Activated naive CD4-positive, alpha-beta T cell treated with anti-CD3 and anti-CD28 coated beads for 36 hours (primary cell): ENCODE measurements at regions of chr6 and their contacts with region 1.

Region 1: GRCh38 chr6:32984605-32985389 is 16.4 kb downstream of the BRD2 start:
- DNase-seq: peak; percentile 97
- H3K4me3 Mint-ChIP-seq: no peak overlapping the region
- H3K27ac Mint-ChIP-seq: no peak overlapping the region
- H3K4me1 Mint-ChIP-seq: peaks cover 14% of the 10 kb centered on the region
- H3K27me3 Mint-ChIP-seq: no peaks in the 10 kb centered on the region

Region 2: GRCh38 chr6:32838114-32838958 is 146.5 kb before region 1 on chr6 and contains the start of gene TAP2:
- CTCF ChIA-PET with region 1: interaction called, 6 read pairs
- intact Hi-C with region 1: loop called (anchors 1 kb)
- DNase-seq: peak; percentile 98
- H3K4me3 Mint-ChIP-seq: peak within 1 kb of the TSS; percentile 89
- H3K27ac Mint-ChIP-seq: peak within 1 kb of the TSS; percentile 99
- H3K4me1 Mint-ChIP-seq: peaks cover 81% of the 10 kb centered on the region
- H3K27me3 Mint-ChIP-seq: no peaks in the 10 kb centered on the region
- total RNA-seq, gene TAP2: 136 to 138 TPM

Region 3: DNA sequence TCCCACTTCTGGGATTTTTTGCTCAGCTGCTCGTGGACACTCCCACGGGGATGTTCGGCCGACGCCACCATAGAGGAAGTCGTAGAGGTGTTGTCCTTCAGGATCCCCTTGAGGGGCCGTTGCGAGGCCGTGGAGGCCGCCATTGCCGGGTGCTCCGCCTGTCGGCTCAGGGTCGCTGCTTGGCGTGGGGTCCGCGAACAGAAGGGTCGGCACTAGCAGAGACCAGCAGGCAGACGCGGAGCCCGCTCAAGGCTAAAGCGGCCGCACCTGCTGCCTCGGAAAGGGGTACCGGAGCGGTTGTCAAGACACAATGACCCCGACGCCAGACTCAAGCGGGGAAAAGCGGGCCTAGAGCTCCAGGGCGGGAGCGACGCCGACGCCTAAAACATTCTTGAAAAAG is 105.1 kb before region 1 on chr6:
- CTCF ChIA-PET with region 1: interaction called, 70 read pairs
- intact Hi-C with region 1: no loop called
- DNase-seq: no peak
- H3K4me3 Mint-ChIP-seq: no peak overlapping the region
- H3K27ac Mint-ChIP-seq: no peak overlapping the region
- H3K4me1 Mint-ChIP-seq: peaks cover 12% of the 10 kb centered on the region
- H3K27me3 Mint-ChIP-seq: no peaks in the 10 kb centered on the region

Region 4: GRCh38 chr6:32894080-32895005 is 90.5 kb before region 1 on chr6:
- CTCF ChIA-PET with region 1: interaction called, 24 read pairs
- intact Hi-C with region 1: loop called (anchors 2 kb)
- DNase-seq: peak; percentile 97
- H3K4me3 Mint-ChIP-seq: peak overlapping the region; percentile 97
- H3K27ac Mint-ChIP-seq: peak overlapping the region; percentile 96
- H3K4me1 Mint-ChIP-seq: peaks cover 37% of the 10 kb centered on the region
- H3K27me3 Mint-ChIP-seq: no peaks in the 10 kb centered on the region

Region 5: DNA sequence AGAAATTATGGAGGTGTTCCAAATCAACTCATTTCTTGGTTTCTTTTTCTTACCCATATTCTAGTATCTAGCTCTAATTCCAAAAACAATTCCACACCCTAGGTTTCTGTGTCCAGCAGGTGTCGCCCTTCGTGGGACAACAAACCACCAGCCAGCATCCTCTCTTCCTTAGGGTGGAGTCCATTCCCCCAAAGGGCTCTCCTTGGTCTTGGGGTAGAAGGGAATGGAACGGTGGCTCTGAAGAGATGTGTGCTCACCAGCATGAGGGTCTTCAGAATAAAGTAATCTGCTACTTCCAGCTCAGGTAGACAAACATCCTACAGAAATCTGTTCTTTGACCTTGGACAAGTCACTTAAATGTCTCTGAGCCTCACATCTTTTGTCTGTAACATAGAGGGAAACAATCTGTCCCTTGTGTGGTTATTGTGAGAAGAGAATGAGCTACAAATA is 51.1 kb before region 1 on chr6:
- CTCF ChIA-PET with region 1: interaction called, 145 read pairs
- intact Hi-C with region 1: loop called (anchors 1 kb)
- DNase-seq: peak; percentile 90
- H3K4me3 Mint-ChIP-seq: no peak overlapping the region
- H3K27ac Mint-ChIP-seq: no peak overlapping the region
- H3K4me1 Mint-ChIP-seq: no peaks in the 10 kb centered on the region
- H3K27me3 Mint-ChIP-seq: no peaks in the 10 kb centered on the region

Region 6: GRCh38 chr6:32947552-32948465 is 37.0 kb before region 1 on chr6:
- CTCF ChIA-PET with region 1: interaction called, 77 read pairs
- intact Hi-C with region 1: loop called (anchors 2 kb)
- DNase-seq: peak; percentile 70
- H3K4me3 Mint-ChIP-seq: no peak overlapping the region
- H3K27ac Mint-ChIP-seq: no peak overlapping the region
- H3K4me1 Mint-ChIP-seq: peaks cover 52% of the 10 kb centered on the region
- H3K27me3 Mint-ChIP-seq: no peaks in the 10 kb centered on the region

Region 7: GRCh38 chr6:33000055-33000454 is 15.3 kb after region 1 on chr6:
- CTCF ChIA-PET with region 1: interaction called, 12 read pairs
- intact Hi-C with region 1: no loop called
- DNase-seq: peak; percentile 58
- H3K4me3 Mint-ChIP-seq: no peak overlapping the region
- H3K27ac Mint-ChIP-seq: no peak overlapping the region
- H3K4me1 Mint-ChIP-seq: peaks cover 4% of the 10 kb centered on the region
- H3K27me3 Mint-ChIP-seq: peaks cover 5% of the 10 kb centered on the region